CD8-positive, alpha-beta T cell (primary cell): ENCODE measurements at regions of chr6 and their contacts with region 1.

Region 1: DNA sequence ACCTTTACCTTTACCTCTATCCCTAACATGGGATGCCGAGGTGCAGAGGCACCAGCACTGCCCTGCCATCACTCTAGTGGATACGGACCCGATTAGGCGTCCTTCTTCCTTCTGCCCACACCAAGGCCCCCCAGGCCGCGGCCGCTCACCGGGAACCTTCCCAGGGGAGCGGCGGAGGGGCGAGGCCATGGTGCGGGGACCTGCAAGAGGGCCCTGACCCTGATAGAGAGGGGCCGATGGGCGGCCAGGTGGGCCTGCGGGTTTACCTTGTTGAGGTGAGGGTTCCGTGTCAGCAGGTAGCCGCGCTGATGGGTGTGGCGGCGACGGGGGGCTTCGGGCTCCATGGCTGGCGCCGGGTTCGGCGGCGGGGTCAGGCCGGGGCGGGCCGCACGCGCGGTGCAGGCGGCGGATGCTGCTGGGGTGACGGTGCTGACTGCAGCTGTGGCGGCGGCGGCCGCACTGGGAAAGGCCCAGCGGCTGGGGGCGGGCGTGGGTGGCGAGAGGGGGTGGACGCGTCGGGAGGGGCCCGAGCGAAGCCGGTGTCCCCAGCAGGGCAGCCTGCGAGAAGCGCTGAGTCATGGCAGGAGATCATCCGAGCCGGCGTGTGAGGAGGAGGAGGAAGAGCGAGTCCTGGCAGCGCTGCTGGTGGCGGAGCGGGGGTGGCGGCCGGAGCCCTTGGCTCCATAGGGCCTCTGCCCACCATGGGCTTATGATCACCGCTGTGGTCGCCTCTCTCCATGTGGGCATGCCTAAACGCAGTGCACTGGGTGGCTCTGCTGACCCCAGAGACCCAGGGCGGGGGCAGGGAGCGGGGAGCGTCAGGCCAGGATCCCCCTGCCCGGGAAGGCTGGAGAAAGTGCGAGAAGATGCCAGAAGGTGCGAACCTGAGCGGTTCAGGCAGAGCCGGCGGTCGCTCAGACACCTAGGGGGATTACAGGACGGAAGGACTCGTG is at the start of gene ME1:
- DNase-seq: peak; percentile 3 to 70 (median 34)
- ATAC-seq: peak; percentile 67
- H3K4me3 ChIP-seq: no peak within 1 kb of the TSS
- H3K4me3 Mint-ChIP-seq: peak within 1 kb of the TSS; percentile 65
- H3K27ac ChIP-seq: no peak within 1 kb of the TSS
- H3K27ac Mint-ChIP-seq: peak within 1 kb of the TSS; percentile 57
- H3K4me1 ChIP-seq: no peaks in the 10 kb centered on the region
- H3K4me1 Mint-ChIP-seq: no peaks in the 10 kb centered on the region
- H3K27me3 ChIP-seq: no peaks in the 10 kb centered on the region
- H3K27me3 Mint-ChIP-seq: peaks cover 25% of the 10 kb centered on the region
- CTCF ChIP-seq: no peak
- total RNA-seq, gene ME1: 0.73 to 1.3 TPM

Region 2: DNA sequence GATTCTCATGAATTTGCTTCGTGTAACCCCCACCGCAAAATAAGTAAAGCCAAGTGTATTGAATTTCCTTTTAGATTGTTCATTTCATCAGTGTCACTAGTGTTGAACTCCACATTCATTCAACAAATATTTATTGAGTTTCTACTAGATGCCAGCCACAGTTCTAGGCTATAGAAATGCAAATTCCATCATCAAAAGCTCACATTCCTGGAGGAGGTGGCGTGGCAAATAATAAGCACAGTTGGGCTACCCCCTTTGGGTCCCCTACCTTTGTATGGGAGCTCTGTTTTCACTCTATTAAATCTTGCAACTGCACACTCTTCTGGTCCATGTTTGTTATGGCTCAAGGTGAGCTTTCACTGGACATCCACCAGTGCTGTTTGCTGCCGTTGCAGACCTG is 12.6 kb after region 1 on chr6:
- CTCF ChIA-PET with region 1: no interaction called
- POLR2A ChIA-PET with region 1: no interaction called
- intact Hi-C with region 1: loop called in 1 of 2 experiments (anchors 2 kb)
- DNase-seq: no peak
- ATAC-seq: no peak
- H3K4me3 ChIP-seq: no peak overlapping the region
- H3K4me3 Mint-ChIP-seq: no peak overlapping the region
- H3K27ac ChIP-seq: no peak overlapping the region
- H3K27ac Mint-ChIP-seq: no peak overlapping the region
- H3K4me1 ChIP-seq: no peaks in the 10 kb centered on the region
- H3K4me1 Mint-ChIP-seq: no peaks in the 10 kb centered on the region
- H3K27me3 ChIP-seq: no peaks in the 10 kb centered on the region
- H3K27me3 Mint-ChIP-seq: no peaks in the 10 kb centered on the region
- CTCF ChIP-seq: no peak